G401 (cell line): ENCODE measurements at regions of chr20 and their contacts with region 1.

Region 1: GRCh38 chr20:49074536-49074935 is 28.4 kb downstream of the CSE1L start:
- DNase-seq: no peak

Region 2: GRCh38 chr20:49106332-49106731 is 31.8 kb after region 1 on chr20:
- in situ Hi-C with region 1: loop called (anchors 5 kb)
- DNase-seq: no peak